ENCODE measurements at regions of chr11 and their contacts with region 1.

Region 1: DNA sequence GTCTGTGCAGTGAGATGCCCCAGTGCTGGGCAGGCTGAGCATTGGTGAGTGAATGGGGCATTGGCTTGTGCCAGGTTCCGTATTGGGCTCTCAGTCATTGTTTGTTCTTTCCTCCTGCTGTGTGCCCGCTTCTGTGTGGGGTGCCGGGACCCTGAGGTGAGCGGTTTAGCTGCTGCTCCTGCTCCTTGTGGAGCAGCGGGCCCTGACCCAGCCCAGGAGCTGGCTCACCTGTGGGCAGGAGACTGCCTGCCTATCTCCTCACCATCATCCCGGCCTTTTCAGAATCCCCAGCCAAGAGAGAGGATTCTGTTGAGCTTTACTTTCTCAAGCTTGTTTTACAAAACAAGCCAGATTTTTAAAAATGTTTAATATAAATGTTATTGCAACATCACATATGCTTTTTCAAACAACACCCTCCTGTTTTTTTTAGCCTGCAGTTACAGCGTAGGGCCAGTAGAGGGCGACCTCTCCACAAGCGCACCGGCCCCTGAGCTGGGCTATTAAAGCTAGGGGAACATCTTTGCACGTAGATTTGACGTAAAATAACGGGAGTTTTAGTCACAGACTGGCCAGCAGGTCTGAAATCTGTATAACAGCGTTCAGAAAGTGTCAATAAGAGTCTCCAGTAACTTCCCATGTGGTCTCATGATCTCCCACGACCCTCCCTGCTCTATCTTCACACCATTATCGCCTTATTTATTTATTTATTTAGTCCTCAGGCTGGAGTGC is 25.1 kb upstream of the RELT start:
- DNase-seq: no peak
- H3K4me3 ChIP-seq: no peak overlapping the region
- H3K27me3 ChIP-seq: no peaks in the 10 kb centered on the region
- CTCF ChIP-seq: peak; percentile 100

Region 2: GRCh38 chr11:73314117-73314961 is 36.7 kb before region 1 on chr11:
- CTCF ChIA-PET with region 1: interaction called, 91 read pairs
- POLR2A ChIA-PET with region 1: no interaction called
- DNase-seq: no peak
- H3K4me3 ChIP-seq: peak overlapping the region; percentile 80
- H3K27me3 ChIP-seq: no peaks in the 10 kb centered on the region
- CTCF ChIP-seq: peak; percentile 23; the same call in 1 of the 2 replicates

Region 3: DNA sequence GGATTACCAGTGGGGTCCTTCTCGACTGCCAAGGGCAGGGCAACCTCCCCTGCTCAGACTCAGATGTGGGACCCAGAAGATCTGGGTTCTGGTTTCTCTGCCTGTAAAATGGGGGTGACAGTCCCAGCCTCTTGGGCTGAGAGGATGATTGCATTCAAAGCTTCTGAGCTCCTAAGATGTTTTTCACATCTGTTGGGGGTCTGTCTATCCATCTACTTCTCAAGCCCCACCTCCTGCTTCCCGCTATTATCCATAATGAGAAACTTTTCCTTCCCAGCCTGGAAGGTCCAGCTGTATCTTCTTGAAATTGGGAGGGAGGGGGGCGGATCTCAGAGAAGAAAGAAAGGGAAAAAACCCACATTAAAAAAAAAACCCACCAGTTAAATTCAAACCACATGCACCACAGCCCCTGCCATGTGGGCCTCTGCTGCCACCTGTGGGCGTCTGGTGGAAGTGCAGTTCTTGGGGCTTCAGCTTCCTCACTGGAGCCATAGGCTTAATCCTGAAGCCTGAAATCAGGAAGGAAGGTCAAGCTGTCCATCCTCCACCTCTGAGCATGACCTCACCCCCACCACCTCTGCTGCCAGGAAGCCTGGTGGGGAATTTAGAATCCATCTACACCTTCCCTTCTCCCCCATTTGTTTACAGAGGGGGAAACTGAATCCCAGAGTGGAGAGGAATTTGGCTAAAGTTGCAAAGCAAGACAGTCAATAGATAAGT is 15.7 kb before region 1 on chr11:
- CTCF ChIA-PET with region 1: interaction called, 121 read pairs
- POLR2A ChIA-PET with region 1: no interaction called
- DNase-seq: no peak
- H3K4me3 ChIP-seq: no peak overlapping the region
- H3K27me3 ChIP-seq: no peaks in the 10 kb centered on the region
- CTCF ChIP-seq: peak; percentile 98

Region 4: DNA sequence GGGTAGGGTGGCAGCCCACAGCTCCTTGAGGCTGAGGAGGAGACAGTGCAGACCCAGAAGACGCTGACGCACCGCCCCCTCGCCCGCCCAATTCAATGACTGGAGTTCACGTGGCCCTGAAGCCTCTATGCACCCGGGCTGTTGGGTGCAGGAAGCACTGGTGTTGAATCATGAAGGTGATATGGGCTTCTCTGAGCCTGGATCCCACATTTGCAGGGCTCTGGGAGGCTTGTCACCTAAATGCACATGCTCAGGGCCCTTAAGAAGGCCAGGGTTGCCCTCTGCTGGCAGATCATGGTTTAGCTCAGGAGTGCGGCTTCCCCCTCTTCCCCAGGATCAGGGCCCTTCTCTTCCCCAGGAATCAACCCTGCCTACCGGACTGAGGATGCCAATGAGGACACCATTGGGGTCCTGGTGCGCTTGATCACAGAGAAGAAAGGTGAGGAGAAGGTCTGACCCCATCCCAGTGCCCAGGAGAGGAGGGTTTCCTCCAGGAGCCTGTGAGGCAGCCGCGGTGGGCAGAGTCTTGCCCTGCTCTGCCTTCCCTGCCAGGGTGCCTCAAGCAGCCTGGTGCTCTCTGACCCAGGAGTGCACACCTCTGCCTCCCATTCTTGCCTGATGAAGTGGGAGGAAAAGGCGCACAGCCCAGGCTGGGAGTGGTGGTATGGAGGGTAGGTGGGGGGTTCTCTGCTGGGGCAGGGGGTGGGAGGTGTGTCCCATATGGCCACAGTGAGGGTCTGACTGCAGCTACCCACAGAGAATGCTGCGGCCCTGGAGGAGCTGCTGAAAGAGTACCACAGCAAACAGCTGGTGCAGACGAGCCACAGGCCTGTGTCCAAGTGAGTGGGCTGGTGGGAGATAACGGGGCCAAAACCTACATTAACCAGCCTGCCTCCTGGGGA is 42.7 kb after region 1 on chr11:
- CTCF ChIA-PET with region 1: interaction called, 28 read pairs
- POLR2A ChIA-PET with region 1: no interaction called
- DNase-seq: no peak
- H3K4me3 ChIP-seq: no peak overlapping the region
- H3K27me3 ChIP-seq: no peaks in the 10 kb centered on the region
- CTCF ChIP-seq: peak; percentile 88

Measured in BJ (cell line).